Aorta (tissue), 5 donors: ENCODE measurements at regions of chr15 and their contacts with region 1.

Region 1: GRCh38 chr15:85831415-85832113 is 36.8 kb upstream of the KLHL25 start:
- DNase-seq: peak; percentile 73 to 84
- ATAC-seq: peak; percentile 85
- H3K4me3 ChIP-seq: no peak overlapping the region
- H3K27ac ChIP-seq: no peak overlapping the region
- H3K4me1 ChIP-seq: no peaks in the 10 kb centered on the region
- H3K27me3 ChIP-seq: no peaks in the 10 kb centered on the region

Region 2: DNA sequence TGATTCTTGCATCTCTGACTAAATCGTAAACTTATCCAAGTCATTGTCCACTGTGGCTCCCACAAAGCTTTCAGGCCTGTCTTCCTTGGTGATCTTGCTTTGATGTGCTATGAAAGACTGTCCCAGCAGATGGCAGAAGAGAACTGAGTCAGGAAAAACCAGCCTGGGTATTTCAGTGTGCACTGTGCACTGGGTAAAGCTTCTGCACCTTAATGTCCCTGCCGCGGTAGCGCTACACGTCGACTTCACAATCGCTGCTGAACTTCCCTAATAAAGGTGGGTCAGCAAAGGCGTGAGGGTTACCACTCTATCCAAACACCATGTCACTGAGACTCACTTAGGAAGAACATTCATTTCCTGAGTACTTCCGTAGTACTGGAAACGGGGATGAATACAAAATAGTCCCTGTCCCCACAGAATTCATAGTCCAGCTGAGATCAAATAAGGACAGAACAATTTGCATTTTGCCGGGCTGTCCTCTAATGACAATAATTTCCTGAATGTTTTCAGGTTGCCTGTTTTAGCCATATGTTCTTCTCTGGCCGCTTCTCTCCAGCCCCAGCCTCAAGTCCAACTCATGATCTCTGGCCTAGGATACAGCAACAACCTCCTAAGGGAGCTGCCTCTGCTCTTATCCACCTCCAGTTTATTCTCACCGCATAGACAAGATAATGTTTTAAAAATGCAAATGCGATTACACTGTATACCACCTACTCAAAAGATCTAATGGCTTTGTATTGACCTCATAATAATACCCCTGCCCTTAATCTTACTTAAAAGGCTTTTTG is 534.8 kb before region 1 on chr15:
- intact Hi-C with region 1: loop called in 1 of 2 experiments (anchors 5 kb)
- DNase-seq: peak in 1 of 2 donors; percentile 53
- ATAC-seq: peak; percentile 91
- H3K4me3 ChIP-seq: peak overlapping the region in 1 of 2 donors; percentile 52
- H3K27ac ChIP-seq: no peak overlapping the region
- H3K4me1 ChIP-seq: no peaks in the 10 kb centered on the region
- H3K27me3 ChIP-seq: no peaks in the 10 kb centered on the region

Region 3: GRCh38 chr15:85485956-85486567 is 345.5 kb before region 1 on chr15:
- intact Hi-C with region 1: loop called (anchors 10 kb)
- DNase-seq: no peak
- ATAC-seq: peak; percentile 91
- H3K4me3 ChIP-seq: no peak overlapping the region
- H3K27ac ChIP-seq: no peak overlapping the region
- H3K4me1 ChIP-seq: no peaks in the 10 kb centered on the region
- H3K27me3 ChIP-seq: no peaks in the 10 kb centered on the region

Region 4: GRCh38 chr15:85494048-85494793 is 337.3 kb before region 1 on chr15:
- intact Hi-C with region 1: loop called (anchors 10 kb)
- DNase-seq: no peak
- ATAC-seq: peak; percentile 44
- H3K4me3 ChIP-seq: no peak overlapping the region
- H3K27ac ChIP-seq: no peak overlapping the region
- H3K4me1 ChIP-seq: no peaks in the 10 kb centered on the region
- H3K27me3 ChIP-seq: no peaks in the 10 kb centered on the region